Psoas muscle (tissue), 8 donors: ENCODE measurements at regions of chr18 and their contacts with region 1.

Region 1: DNA sequence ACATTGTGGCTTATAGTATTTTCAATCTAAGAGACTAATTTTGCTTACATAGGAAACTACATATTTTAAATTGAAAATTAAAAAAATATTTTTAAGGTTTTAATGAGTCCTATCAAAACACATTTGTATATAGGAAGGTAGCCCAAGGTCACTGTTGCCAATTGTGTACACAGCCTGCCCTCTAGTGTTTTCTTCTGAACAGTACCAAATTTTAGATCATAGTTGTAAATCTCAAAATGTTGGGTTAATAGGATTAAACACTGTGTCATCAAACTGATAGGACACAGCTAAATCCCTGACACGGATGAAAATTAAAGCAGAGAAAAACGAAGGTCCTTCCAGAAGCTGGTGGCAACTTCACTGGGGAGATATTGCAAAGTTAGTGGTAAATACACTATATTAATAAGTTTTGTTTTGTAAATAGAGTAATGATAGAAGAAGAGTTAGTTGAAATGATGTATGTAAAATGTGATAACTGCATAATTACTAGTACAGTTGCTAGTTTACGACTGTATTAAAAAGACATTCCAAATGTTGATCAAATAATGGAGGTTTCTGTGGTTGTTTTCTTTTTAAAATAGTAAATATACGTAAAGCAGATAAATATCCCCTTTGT is 19.7 kb downstream of the CLUL1 start:
- DNase-seq: no peak
- ATAC-seq: peak in 1 of 4 donors; percentile 49
- H3K4me3 ChIP-seq: no peak overlapping the region
- H3K27ac ChIP-seq: no peak overlapping the region
- H3K4me1 ChIP-seq: no peaks in the 10 kb centered on the region
- H3K27me3 ChIP-seq: no peaks in the 10 kb centered on the region
- CTCF ChIP-seq: peak; percentile 61

Region 2: DNA sequence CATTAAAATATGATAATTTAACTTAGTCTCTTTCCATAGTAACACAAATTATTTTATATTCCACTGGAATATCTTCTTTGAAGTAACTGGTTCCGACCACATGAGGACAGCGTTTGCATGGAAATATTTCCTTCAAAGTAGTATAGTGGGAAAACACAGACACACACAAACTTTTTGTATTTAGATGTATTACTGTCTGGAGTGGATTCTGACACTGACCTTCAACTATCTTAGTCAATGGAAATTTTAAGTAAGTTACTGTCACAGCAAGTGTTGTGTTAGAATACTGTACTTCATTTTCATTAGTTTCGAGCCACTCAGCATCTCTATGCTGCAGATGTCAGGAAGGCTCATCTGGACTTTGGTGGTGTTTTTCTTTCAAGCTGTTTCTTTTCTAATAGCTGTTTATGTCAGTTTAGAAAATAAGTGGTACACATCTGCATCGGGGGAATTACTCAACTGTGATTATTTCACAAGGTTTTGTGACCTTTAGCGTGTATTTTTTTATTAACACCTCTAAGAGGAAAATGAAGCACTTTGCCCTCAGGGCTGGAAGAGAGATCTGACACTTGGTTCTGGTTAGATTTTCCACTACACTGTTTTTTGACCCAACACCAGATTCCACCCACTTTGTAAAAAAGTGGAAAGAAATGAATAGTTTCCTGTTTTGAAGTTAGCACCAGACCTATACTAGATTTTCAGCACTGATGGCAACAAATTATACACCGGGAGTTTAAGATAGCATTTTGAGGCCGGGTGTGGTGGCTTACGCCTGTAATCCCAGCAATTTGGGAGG is 329.8 kb before region 1 on chr18:
- intact Hi-C with region 1: loop called in 1 of 2 experiments (anchors 5 kb)
- DNase-seq: no peak
- ATAC-seq: no peak
- H3K4me3 ChIP-seq: no peak overlapping the region
- H3K27ac ChIP-seq: no peak overlapping the region
- H3K4me1 ChIP-seq: no peaks in the 10 kb centered on the region
- H3K27me3 ChIP-seq: no peaks in the 10 kb centered on the region
- CTCF ChIP-seq: peak; percentile 17